ENCODE measurements at regions of chr16 and their contacts with region 1.

Region 1: DNA sequence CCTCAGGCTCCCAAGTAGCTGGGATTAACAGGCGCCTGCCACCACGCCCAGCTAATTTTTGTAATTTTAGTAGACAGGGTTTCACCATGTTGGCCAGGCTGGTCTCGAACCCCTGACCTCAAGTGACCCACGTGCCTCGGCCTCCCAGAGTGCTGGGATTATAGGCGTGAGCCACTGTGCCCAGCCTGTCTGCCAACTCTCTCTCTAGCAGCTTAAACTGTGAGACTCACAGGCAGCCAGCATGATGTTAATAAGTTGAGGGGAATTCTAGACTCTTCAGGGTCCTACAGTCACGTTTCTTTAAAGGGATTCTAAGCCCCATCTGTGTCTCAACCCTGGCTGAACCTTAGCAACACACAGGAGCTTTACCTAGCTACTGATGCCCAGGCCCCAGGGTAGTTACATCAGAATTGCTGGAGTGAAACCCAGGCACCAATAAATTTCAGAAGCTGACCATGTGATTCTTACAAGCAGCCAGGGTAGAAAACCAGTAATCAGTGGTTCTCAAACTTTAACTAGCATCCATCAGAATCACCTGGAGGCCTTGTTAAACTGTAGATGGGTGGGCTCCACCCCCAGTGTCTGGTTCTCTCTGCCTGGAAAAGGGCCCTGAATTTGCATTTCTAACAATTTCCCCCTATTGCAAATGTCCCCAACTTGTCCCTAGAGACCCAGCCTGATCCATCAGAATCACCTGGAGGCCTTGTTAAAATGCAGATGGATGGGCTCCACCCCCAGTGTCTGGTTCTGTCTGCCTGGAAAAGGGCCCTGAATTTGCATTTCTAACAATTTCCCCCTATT is 30.7 kb downstream of the GPRC5B start:
- DNase-seq: no peak
- ATAC-seq: no peak
- H3K4me3 ChIP-seq: no peak overlapping the region
- H3K27ac ChIP-seq: peak overlapping the region in 3 of 10 donors; percentile 9 to 23 (median 20)
- H3K4me1 ChIP-seq: peaks cover 3 to 28% (median 17%) of the 10 kb centered on the region in 9 donors
- H3K27me3 ChIP-seq: no peaks in the 10 kb centered on the region
- CTCF ChIP-seq: no peak

Region 2: GRCh38 chr16:19737306-19738038 is 116.5 kb before region 1 on chr16:
- intact Hi-C with region 1: loop called in 1 of 10 experiments (anchors 10 kb)
- DNase-seq: no peak
- ATAC-seq: peak in 1 of 8 donors; percentile 61
- H3K4me3 ChIP-seq: no peak overlapping the region
- H3K27ac ChIP-seq: peak overlapping the region in 2 of 10 donors; percentile 3 to 25
- H3K4me1 ChIP-seq: peaks cover 0 to 44% (median 22%) of the 10 kb centered on the region in 9 donors
- H3K27me3 ChIP-seq: no peaks in the 10 kb centered on the region
- CTCF ChIP-seq: no peak

Region 3: DNA sequence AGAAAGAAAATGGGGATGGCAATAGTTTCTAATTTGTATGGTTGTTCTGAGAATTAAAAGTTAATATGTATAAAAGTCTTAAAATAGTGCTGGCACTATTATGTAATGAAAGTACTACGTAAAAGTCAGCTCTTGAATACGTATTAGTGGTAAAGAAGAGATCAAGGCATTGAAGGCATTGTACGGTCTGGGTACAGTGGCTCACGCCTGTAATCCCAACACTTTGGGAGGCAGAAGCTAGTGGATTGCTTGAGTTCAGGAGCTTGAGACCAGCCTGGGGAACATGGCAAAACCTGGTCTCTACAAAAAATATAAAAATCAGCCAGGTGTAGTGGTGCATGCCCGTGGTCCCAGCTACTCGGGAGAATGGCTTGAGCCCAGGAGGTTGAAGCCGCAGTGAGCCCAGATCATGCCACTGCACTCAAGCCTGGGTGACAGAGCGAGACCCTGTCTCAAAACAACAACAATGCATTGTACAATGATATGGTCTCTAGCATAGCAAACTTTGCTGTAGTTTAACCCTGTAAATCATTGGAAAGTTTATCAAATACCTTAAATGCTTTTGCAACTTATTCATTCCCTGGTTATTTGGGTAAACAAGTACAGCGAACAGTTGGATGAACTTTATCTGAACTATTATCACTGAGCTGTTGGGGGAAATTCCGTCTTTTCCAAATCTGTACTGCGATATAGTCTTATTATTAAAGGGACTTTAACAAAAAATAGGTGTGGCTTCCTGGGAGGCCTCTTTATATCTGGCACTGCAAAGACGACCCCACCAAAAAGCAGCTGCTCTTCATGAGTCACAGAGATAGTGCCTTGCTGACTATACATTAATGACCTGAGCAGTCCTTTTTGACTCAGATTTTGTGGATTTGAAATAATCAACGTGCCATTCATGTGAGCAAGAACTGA is 42.9 kb before region 1 on chr16:
- intact Hi-C with region 1: no loop called
- DNase-seq: no peak
- ATAC-seq: peak in 4 of 8 donors; percentile 16 to 64 (median 28)
- H3K4me3 ChIP-seq: no peak overlapping the region
- H3K27ac ChIP-seq: peak overlapping the region in 6 of 10 donors; percentile 13 to 64 (median 42)
- H3K4me1 ChIP-seq: peaks cover 0 to 47% (median 28%) of the 10 kb centered on the region in 9 donors
- H3K27me3 ChIP-seq: no peaks in the 10 kb centered on the region
- CTCF ChIP-seq: no peak

Measured in heart right ventricle (tissue), 16 donors.